ENCODE measurements at regions of chr14 and their contacts with region 1.

Region 1: DNA sequence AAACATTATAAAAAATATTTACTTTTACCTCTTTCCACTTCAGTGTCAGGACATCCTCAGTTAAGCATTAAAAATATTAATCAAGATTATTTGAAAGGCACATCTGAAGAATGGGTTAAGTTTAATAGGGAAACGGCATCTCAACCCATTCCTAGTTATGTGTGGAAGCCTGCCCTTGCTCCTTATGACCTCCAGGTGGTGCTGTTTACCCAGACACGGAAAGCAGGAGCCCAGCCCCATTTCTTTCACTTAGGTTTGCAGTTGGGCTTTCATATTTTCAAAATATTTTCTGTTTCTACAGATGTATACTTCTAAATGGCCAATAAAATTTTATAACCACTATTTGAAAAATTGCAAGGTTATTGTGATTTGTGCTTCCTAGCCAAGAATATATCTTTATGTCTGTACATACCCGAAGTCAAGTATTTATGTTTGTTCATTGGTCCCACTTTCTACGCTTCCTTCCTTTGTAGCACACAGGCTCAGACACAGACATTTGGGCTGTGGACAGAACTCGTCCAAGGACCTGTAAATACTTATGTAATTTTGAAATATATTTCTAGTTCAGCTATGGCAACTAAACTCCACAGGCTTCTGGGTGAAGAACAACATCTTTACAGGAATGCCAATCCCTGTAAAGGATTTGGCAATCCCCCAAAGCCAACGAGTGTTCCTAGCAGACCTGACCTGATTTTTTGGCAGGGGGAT is 247.1 kb downstream of the AKAP6 start:
- DNase-seq: peak; percentile 15 to 43 (median 36)
- H3K4me3 ChIP-seq: no peak overlapping the region
- H3K4me3 Mint-ChIP-seq: peak overlapping the region in 1 of 2 donors; percentile 14
- H3K27ac ChIP-seq: no peak overlapping the region
- H3K27ac Mint-ChIP-seq: no peak overlapping the region
- H3K4me1 ChIP-seq: no peaks in the 10 kb centered on the region
- H3K4me1 Mint-ChIP-seq: peaks cover 3% of the 10 kb centered on the region
- H3K27me3 ChIP-seq: peaks cover 0 to 4% of the 10 kb centered on the region in 2 donors
- H3K27me3 Mint-ChIP-seq: peaks cover 2 to 6% (median 2%) of the 10 kb centered on the region in 3 donors
- CTCF ChIP-seq: peak; percentile 93

Region 2: DNA sequence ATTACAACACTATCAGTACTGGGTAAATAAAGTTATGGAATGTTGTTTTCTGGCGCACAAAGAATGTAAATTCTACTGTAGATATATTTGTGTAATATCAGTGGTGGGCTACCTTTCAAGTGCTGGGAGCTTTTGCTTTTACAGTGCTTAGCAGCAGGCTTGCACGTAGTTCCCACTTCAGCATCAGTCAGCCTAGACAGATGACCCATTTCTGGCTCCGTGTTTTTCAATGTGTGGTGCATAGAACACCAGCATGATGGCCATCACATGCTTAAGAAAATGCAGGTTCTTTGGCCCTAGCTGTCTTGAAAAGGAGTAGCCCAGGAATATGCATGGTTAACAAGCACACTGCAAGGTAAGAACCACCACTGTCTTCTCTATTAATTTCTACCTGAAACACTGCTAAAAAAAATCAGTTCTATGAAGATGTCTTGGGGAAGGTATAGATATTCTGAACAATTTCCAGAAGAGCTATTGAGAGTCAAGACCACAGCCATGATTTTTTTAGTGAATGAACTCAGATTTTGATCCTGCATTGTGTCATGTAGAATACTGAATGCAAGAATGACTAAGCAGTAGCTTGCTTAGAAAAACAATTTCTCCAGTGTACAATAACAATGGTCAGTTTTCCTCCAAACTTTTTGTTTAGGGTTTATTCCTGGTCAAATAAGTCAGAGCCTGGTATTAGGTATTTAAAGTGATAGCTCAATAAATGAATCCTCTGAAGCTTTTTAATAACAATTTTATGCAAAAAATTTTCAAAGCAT is 51.5 kb before region 1 on chr14:
- intact Hi-C with region 1: no loop called
- DNase-seq: no peak
- H3K4me3 ChIP-seq: no peak overlapping the region
- H3K4me3 Mint-ChIP-seq: no peak overlapping the region
- H3K27ac ChIP-seq: no peak overlapping the region
- H3K27ac Mint-ChIP-seq: no peak overlapping the region
- H3K4me1 ChIP-seq: no peaks in the 10 kb centered on the region
- H3K4me1 Mint-ChIP-seq: no peaks in the 10 kb centered on the region
- H3K27me3 ChIP-seq: no peaks in the 10 kb centered on the region
- H3K27me3 Mint-ChIP-seq: peaks cover 0 to 2% (median 1%) of the 10 kb centered on the region in 3 donors
- CTCF ChIP-seq: no peak

Region 3: DNA sequence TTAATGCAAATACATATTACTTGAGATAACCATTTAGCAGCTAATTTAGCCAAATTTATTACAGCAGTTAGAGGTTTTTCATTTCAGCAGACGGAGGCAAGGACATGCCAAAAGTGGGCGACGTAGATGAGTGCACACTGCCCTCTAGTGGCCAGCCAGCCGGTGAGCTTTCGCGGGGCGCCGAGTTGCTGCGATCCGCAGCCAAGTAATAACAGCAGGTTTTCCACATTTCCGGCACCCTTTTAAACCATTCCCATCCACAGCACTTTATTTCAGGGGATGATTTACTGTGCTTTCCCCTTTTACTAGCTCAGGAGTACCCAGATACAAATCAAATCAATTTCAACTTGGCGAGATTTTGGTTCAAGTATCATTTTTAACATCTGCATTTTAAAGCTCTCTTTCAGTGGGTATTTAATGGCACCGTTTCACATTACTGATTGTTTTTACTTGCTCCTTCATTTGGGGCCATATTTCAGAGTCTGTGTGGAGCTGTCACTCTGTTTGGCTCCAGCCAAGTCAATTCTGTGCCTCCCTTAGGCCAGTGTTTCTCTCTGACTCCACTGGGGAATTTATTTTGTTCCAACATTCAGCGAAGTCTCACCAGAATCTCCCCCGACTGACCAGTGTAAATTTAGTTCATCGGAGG is 1216.6 kb after region 1 on chr14:
- intact Hi-C with region 1: loop called (anchors 2 to 5 kb)
- DNase-seq: peak; percentile 19 to 41 (median 27)
- H3K4me3 ChIP-seq: no peak overlapping the region
- H3K4me3 Mint-ChIP-seq: peak overlapping the region in 1 of 2 donors; percentile 54
- H3K27ac ChIP-seq: no peak overlapping the region
- H3K27ac Mint-ChIP-seq: no peak overlapping the region
- H3K4me1 ChIP-seq: no peaks in the 10 kb centered on the region
- H3K4me1 Mint-ChIP-seq: peaks cover 4% of the 10 kb centered on the region
- H3K27me3 ChIP-seq: peaks cover 4 to 13% of the 10 kb centered on the region in 2 donors
- H3K27me3 Mint-ChIP-seq: peaks cover 22 to 32% (median 24%) of the 10 kb centered on the region in 3 donors
- CTCF ChIP-seq: peak; percentile 91

Measured in CD14-positive monocyte (primary cell).